Activated T-helper 1 cell treated with anti-CD3 and anti-CD28 coated beads, Interleukin-12 subunit alpha, Interleukin-12 subunit beta, Interleukin-2, Interleukin-4 antibody, amounts not matched to agents 30 ng/mL and 10 ng/mL and 1 ng/mL, durations not matched to agents 14 hours and 24 hours and 36 hours (primary cell): ENCODE measurements at regions of chr4 and their contacts with region 1.

Region 1: DNA sequence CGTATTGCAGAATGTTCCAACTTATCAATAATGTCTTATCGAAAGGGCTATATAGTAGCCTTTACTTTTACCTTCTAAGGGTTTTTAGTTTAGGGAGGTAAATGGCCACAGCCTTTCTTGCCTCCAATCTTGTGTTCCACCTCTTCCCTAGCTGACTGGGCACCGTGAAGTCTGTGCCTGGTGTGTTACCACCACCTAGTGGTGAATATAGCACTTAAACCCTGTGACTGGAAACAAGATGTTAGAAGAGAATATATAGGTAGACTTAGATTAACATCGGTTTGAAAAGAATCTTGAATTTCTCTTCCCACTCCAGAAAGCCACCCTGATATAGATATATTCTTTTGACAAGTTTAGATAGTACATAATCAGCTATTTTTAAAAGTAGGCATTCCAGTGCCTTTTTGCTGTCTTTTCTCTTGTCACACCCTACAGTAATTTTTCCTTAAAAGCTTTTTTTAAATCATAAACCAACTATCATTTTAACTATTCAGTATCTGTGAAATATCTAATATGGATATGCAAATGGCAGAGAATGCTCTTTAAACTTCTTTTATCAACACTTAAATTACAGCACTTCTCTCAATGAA is 27.8 kb upstream of the ADH7 start:
- DNase-seq: peak; percentile 37
- H3K4me3 Mint-ChIP-seq: no peak overlapping the region
- H3K27ac Mint-ChIP-seq: no peak overlapping the region
- H3K4me1 Mint-ChIP-seq: no peaks in the 10 kb centered on the region
- H3K27me3 Mint-ChIP-seq: peaks cover 11% of the 10 kb centered on the region

Region 2: DNA sequence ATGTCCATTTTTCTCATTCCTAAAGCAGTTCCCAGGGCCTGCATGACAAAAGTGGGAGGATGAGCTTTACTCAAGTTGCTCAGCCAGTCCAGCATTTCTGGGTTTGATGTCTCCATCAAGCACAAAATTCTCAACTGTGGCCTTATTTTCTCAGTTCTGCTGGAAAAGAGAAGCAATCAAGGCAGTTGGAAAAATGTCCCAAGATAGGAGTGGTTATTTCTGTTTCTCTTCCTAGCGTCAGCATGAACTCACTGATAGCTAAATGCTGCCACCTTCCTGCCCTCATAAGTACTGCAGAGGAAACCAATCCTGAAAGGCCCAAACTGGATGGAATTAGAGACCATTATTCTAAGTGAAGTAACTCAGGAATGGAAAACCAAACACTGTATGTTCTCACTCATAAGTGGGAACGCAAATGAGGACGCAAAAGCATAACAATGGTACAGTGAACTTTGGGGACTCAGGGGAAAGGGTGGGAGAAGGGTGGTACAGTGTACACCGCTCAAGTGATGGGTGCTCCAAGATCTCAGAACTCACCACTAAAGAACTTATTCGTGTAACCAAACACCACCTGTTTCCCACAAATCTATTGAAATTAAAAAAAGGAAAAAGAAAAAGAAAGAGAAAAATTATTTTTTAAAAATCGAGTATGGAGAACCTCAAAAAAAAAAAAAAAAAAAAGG is 57.4 kb before region 1 on chr4:
- intact Hi-C with region 1: loop called (anchors 1 kb)
- DNase-seq: peak; percentile 25
- H3K4me3 Mint-ChIP-seq: no peak overlapping the region
- H3K27ac Mint-ChIP-seq: no peak overlapping the region
- H3K4me1 Mint-ChIP-seq: peaks cover 19% of the 10 kb centered on the region
- H3K27me3 Mint-ChIP-seq: peaks cover 11% of the 10 kb centered on the region